Thyroid gland (tissue), 4 donors: ENCODE measurements at regions of chr18 and their contacts with region 1.

Region 1: GRCh38 chr18:10851824-10852319 is 297.5 kb downstream of the PIEZO2 start:
- DNase-seq: no peak
- H3K4me3 ChIP-seq: no peak overlapping the region
- H3K27ac ChIP-seq: no peak overlapping the region
- H3K4me1 ChIP-seq: peaks cover 11 to 15% of the 10 kb centered on the region in 2 donors
- H3K27me3 ChIP-seq: no peaks in the 10 kb centered on the region
- CTCF ChIP-seq: peak; percentile 46 to 92 (median 63)
- POLR2A ChIP-seq: no peak

Region 2: GRCh38 chr18:10705291-10705690 is 146.6 kb before region 1 on chr18:
- intact Hi-C with region 1: no loop called
- DNase-seq: no peak
- H3K4me3 ChIP-seq: no peak overlapping the region
- H3K27ac ChIP-seq: no peak overlapping the region
- H3K4me1 ChIP-seq: no peaks in the 10 kb centered on the region
- H3K27me3 ChIP-seq: no peaks in the 10 kb centered on the region
- CTCF ChIP-seq: no peak
- POLR2A ChIP-seq: no peak

Region 3: GRCh38 chr18:11040823-11041656 is 189.2 kb after region 1 on chr18:
- intact Hi-C with region 1: loop called (anchors 5 kb)
- DNase-seq: peak; percentile 58
- H3K4me3 ChIP-seq: no peak overlapping the region
- H3K27ac ChIP-seq: no peak overlapping the region
- H3K4me1 ChIP-seq: peaks cover 0 to 4% of the 10 kb centered on the region in 2 donors
- H3K27me3 ChIP-seq: no peaks in the 10 kb centered on the region
- CTCF ChIP-seq: peak; percentile 53 to 88 (median 72)
- POLR2A ChIP-seq: no peak

Region 4: GRCh38 chr18:11149441-11150270 is 297.8 kb after region 1 on chr18 and contains the start of gene PIEZO2:
- intact Hi-C with region 1: loop called (anchors 10 kb)
- DNase-seq: peak; percentile 35 to 45
- H3K4me3 ChIP-seq: peak within 1 kb of the TSS in 1 of 3 donors; percentile 28
- H3K27ac ChIP-seq: no peak within 1 kb of the TSS
- H3K4me1 ChIP-seq: peaks cover 6 to 17% of the 10 kb centered on the region in 2 donors
- H3K27me3 ChIP-seq: no peaks in the 10 kb centered on the region
- CTCF ChIP-seq: no peak
- POLR2A ChIP-seq: peak in 1 of 2 donors; percentile 37
- total RNA-seq, gene PIEZO2: 5.0 to 13.8 (median 6.1) TPM

Region 5: GRCh38 chr18:11553098-11553940 is 701.4 kb after region 1 on chr18:
- intact Hi-C with region 1: loop called (anchors 5 kb)
- DNase-seq: peak; percentile 18 to 24
- H3K4me3 ChIP-seq: no peak overlapping the region
- H3K27ac ChIP-seq: no peak overlapping the region
- H3K4me1 ChIP-seq: no peaks in the 10 kb centered on the region
- H3K27me3 ChIP-seq: no peaks in the 10 kb centered on the region
- CTCF ChIP-seq: peak; percentile 72 to 87 (median 78)
- POLR2A ChIP-seq: no peak